Heart right ventricle (tissue), 16 donors: ENCODE measurements at regions of chr9 and their contacts with region 1.

Region 1: GRCh38 chr9:77092536-77092935 is 73.1 kb downstream of the FOXB2 start:
- DNase-seq: no peak
- ATAC-seq: no peak
- H3K4me3 ChIP-seq: no peak overlapping the region
- H3K27ac ChIP-seq: no peak overlapping the region
- H3K4me1 ChIP-seq: no peaks in the 10 kb centered on the region
- H3K27me3 ChIP-seq: peaks cover 0 to 17% (median 3%) of the 10 kb centered on the region in 7 donors
- CTCF ChIP-seq: no peak

Region 2: GRCh38 chr9:77038281-77039036 is 54.1 kb before region 1 on chr9:
- intact Hi-C with region 1: loop called in 1 of 10 experiments (anchors 10 kb)
- DNase-seq: no peak
- ATAC-seq: no peak
- H3K4me3 ChIP-seq: no peak overlapping the region
- H3K27ac ChIP-seq: no peak overlapping the region
- H3K4me1 ChIP-seq: no peaks in the 10 kb centered on the region
- H3K27me3 ChIP-seq: peaks cover 0 to 63% (median 15%) of the 10 kb centered on the region in 7 donors
- CTCF ChIP-seq: no peak

Region 3: DNA sequence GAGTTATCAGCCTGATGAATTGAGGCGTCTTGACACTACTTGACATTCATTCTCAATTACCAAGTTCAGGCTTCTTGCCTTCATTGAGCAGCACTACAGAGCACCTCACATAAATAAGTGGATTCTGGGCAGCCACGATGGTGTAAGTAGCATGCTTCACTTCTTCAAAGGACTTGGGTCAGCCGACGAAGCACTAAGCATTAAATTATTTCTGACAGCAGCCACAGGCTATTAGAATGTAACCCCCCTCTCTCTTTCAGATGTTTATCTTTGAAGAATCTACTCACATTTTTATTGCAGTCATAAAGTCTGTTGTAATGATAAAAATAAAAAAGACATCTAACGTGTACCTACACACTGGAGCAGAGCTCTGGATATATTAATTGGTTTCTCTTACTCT is 38.9 kb after region 1 on chr9:
- intact Hi-C with region 1: no loop called
- DNase-seq: no peak
- ATAC-seq: no peak
- H3K4me3 ChIP-seq: no peak overlapping the region
- H3K27ac ChIP-seq: no peak overlapping the region
- H3K4me1 ChIP-seq: no peaks in the 10 kb centered on the region
- H3K27me3 ChIP-seq: peaks cover 0 to 4% (median under 1%) of the 10 kb centered on the region in 7 donors
- CTCF ChIP-seq: no peak

Region 4: DNA sequence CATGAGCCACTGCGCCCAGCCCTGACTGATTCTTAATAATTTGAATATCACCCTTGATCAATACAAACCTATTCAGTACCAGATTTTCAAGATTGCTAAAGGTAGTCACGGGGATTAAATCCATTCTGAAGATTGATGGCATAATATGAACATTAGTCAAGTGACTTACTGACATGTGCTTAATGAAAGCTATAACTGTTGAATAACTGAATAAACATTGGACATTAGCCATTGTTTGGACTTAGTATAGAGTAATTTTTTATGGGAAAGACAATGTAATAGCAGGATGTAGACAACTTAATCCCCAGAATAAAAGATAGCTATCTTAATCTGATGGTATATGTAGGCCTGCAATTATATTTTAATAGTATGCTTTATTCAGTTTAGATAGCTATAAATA is 49.8 kb after region 1 on chr9:
- intact Hi-C with region 1: no loop called
- DNase-seq: no peak
- ATAC-seq: no peak
- H3K4me3 ChIP-seq: no peak overlapping the region
- H3K27ac ChIP-seq: no peak overlapping the region
- H3K4me1 ChIP-seq: no peaks in the 10 kb centered on the region
- H3K27me3 ChIP-seq: peaks cover 0 to 6% (median 0%) of the 10 kb centered on the region in 7 donors
- CTCF ChIP-seq: no peak

Region 5: GRCh38 chr9:77276799-77277198 is 184.3 kb after region 1 on chr9:
- intact Hi-C with region 1: no loop called
- DNase-seq: no peak
- ATAC-seq: no peak
- H3K4me3 ChIP-seq: no peak overlapping the region
- H3K27ac ChIP-seq: no peak overlapping the region
- H3K4me1 ChIP-seq: peaks cover 0 to 6% (median 0%) of the 10 kb centered on the region in 9 donors
- H3K27me3 ChIP-seq: no peaks in the 10 kb centered on the region
- CTCF ChIP-seq: no peak